ENCODE measurements at regions of chr19 and their contacts with region 1.

Region 1: GRCh38 chr19:36489118-36489919 is at the start of gene ZNF566:
- DNase-seq: peak; percentile 82 to 98 (median 89)

Region 2: GRCh38 chr19:36418287-36419001 is 70.9 kb before region 1 on chr19 and contains the start of gene ZFP82:
- intact Hi-C with region 1: loop called (anchors 2 kb)
- DNase-seq: peak; percentile 72 to 97 (median 79)